Activated T-helper 1 cell treated with anti-CD3 and anti-CD28 coated beads, Interleukin-12 subunit alpha, Interleukin-12 subunit beta, Interleukin-2, Interleukin-4 antibody, amounts not matched to agents 30 ng/mL and 10 ng/mL and 1 ng/mL, durations not matched to agents 14 hours and 24 hours and 36 hours (primary cell): ENCODE measurements at regions of chr1 and their contacts with region 1.

Region 1: DNA sequence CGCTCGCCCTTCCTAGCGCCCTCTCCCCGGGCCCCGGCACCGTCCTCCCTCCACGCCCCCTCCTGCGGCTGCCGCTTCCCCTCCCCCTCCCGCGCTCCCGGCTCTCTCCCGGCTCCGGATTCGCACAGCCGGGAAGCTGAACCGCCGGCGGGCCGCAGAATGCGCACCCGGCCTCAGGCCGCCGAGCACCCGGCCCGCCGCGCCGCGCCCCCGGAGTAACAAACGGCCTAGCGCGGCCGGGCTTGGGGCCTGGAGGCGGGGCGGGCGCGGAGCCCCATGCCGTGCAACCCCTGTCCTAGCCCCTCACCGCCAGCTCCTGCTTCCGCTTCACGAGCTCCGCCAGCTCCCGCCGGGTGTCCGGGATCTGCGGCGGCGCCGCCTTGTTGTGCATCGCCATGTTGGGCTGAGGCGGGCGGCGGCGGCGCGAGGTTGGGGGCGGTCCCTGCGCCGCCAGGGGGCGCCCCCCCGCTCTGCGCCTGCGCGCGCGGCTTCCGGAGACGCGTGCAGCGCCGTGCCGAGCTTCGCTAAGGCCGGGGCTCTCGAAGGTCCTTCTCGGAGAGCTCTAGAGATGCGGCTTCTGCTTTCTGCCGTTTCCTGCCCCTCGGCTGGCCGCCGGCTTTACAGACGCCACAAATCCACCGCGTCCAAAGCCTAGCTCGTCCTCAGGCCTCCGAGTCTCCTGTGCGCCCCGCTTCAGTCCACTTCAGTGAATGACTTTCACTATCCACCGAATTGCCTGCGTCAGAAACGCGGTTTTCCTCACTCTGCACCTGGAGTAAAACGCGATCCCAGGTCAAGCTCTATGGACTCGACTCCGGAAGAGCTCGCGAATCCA is at the start of gene MEAF6:
- DNase-seq: peak; percentile 84
- H3K4me3 Mint-ChIP-seq: peak within 1 kb of the TSS; percentile 96
- H3K27ac Mint-ChIP-seq: peak within 1 kb of the TSS; percentile 96
- H3K4me1 Mint-ChIP-seq: peaks cover 45% of the 10 kb centered on the region
- H3K27me3 Mint-ChIP-seq: no peaks in the 10 kb centered on the region
- total RNA-seq, gene MEAF6: 102 and 103 TPM in 2 replicates

Region 2: GRCh38 chr1:37455516-37455915 is 59.1 kb before region 1 on chr1:
- intact Hi-C with region 1: loop called (anchors 1 kb)
- DNase-seq: no peak
- H3K4me3 Mint-ChIP-seq: no peak overlapping the region
- H3K27ac Mint-ChIP-seq: no peak overlapping the region
- H3K4me1 Mint-ChIP-seq: peaks cover 7% of the 10 kb centered on the region
- H3K27me3 Mint-ChIP-seq: no peaks in the 10 kb centered on the region

Region 3: GRCh38 chr1:37479255-37480124 is 35.1 kb before region 1 on chr1:
- intact Hi-C with region 1: loop called (anchors 1 kb)
- DNase-seq: peak; percentile 84
- H3K4me3 Mint-ChIP-seq: peak overlapping the region; percentile 100
- H3K27ac Mint-ChIP-seq: peak overlapping the region; percentile 97
- H3K4me1 Mint-ChIP-seq: peaks cover 42% of the 10 kb centered on the region
- H3K27me3 Mint-ChIP-seq: peaks cover 2% of the 10 kb centered on the region

Region 4: GRCh38 chr1:37486680-37487618 is 27.6 kb before region 1 on chr1:
- intact Hi-C with region 1: loop called (anchors 2 kb)
- DNase-seq: peak; percentile 63
- H3K4me3 Mint-ChIP-seq: no peak overlapping the region
- H3K27ac Mint-ChIP-seq: peak overlapping the region; percentile 68
- H3K4me1 Mint-ChIP-seq: peaks cover 14% of the 10 kb centered on the region
- H3K27me3 Mint-ChIP-seq: no peaks in the 10 kb centered on the region

Region 5: DNA sequence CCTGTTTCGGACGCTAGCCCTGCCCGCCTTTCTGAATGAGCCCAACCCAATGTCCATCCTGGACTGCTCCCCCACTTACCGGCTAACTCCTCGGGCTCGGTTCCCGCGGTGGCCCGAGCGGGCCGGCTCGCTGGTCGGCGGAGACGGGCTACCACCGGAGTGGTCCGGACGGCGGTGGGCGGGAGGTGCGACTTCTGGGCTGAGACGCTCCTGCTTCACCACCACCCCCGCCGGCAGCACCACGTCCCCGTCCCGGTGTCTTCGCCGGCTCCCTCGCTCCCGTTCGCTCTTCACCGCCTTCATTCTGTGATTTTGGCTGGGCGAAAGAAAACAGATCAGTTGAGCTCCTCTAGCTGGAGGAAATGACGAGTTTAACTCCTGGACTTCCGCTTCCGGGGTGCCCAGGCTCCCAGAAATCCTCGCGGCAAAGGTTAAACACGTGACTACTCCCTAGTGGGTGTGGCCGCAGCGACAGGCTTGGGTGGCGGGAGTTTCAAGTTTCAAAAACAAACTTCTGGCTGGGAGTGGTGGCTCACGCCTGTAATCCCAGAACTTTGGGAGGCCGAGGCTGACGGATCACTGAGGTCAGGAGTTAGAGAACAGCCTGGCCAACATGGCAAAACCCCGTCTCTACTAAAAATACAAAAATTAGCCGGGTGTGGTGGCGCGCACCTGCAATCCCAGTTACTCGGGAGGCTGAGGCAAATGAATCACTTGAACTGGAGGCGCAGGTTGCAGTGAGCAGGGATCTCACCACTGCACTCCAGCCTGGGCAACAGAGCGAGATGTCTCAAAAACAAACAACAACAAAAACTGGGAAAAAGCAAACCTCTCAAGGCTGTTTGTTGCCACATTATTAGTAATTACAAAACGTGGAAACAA is 39.6 kb after region 1 on chr1 and contains the start of gene SNIP1:
- intact Hi-C with region 1: loop called (anchors 1 kb)
- DNase-seq: peak; percentile 89
- H3K4me3 Mint-ChIP-seq: peak within 1 kb of the TSS; percentile 98
- H3K27ac Mint-ChIP-seq: peak within 1 kb of the TSS; percentile 98
- H3K4me1 Mint-ChIP-seq: peaks cover 49% of the 10 kb centered on the region
- H3K27me3 Mint-ChIP-seq: no peaks in the 10 kb centered on the region
- total RNA-seq, gene SNIP1: 28.1 and 30.2 TPM in 2 replicates